Posterior vena cava (tissue), 2 donors: ENCODE measurements at regions of chr1 and their contacts with region 1.

Region 1: GRCh38 chr1:75166821-75167220 is 32.6 kb downstream of the LHX8 start:
- DNase-seq: no peak

Region 2: GRCh38 chr1:75203415-75204277 is 36.8 kb after region 1 on chr1:
- intact Hi-C with region 1: no loop called
- DNase-seq: no peak

Region 3: GRCh38 chr1:75233302-75233929 is 66.6 kb after region 1 on chr1:
- intact Hi-C with region 1: loop called in 1 of 2 experiments (anchors 2 kb)
- DNase-seq: no peak

Region 4: GRCh38 chr1:75672528-75673393 is 505.9 kb after region 1 on chr1:
- intact Hi-C with region 1: no loop called
- DNase-seq: no peak